BJ (cell line): ENCODE measurements at regions of chr15 and their contacts with region 1.

Region 1: DNA sequence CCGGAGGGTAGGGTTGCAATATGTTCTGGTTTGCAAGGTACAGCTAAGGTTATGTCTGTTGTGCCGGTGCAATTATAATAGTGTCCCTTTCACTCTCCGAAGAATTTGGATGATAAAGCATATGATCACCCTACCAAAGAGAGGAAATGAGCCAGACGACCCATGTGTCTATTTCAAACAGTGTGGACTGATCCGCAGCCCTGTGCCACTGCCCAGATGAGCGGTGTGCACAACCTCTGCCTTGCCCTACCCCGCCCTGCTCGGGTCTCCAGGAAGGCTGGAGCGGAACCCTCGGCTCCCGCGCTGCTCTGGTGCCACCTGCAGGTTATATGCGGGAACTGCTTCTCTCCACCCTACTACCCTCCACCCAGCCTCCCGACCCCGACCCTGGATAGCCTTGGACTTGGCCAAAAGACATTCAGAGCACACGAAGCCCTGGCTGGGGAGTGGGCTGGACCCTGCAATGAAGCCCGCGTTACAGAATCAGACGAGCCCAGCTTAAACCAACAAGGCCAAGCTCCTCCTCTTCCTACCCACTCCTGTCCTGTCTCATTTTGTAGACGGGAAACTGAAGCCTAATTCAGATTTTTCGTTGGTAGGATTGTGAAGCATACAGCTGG is 68.4 kb upstream of the CHRNB4 start:
- DNase-seq: no peak
- H3K4me3 ChIP-seq: no peak overlapping the region
- H3K27me3 ChIP-seq: no peaks in the 10 kb centered on the region; the same call in none of the 2 replicates
- CTCF ChIP-seq: peak; percentile 93

Region 2: GRCh38 chr15:78540929-78541743 is 168.2 kb before region 1 on chr15:
- CTCF ChIA-PET with region 1: no interaction called
- POLR2A ChIA-PET with region 1: no interaction called
- DNase-seq: no peak
- H3K4me3 ChIP-seq: peak overlapping the region; percentile 63
- H3K27me3 ChIP-seq: no peaks in the 10 kb centered on the region
- CTCF ChIP-seq: no peak

Region 3: GRCh38 chr15:78618490-78618934 is 90.9 kb before region 1 on chr15:
- CTCF ChIA-PET with region 1: interaction called, 83 read pairs
- POLR2A ChIA-PET with region 1: no interaction called
- DNase-seq: peak; percentile 70
- H3K4me3 ChIP-seq: no peak overlapping the region
- H3K27me3 ChIP-seq: peaks cover 26% of the 10 kb centered on the region
- CTCF ChIP-seq: peak; percentile 79

Region 4: GRCh38 chr15:78638658-78639314 is 70.6 kb before region 1 on chr15:
- CTCF ChIA-PET with region 1: interaction called, 21 read pairs
- POLR2A ChIA-PET with region 1: no interaction called
- DNase-seq: no peak
- H3K4me3 ChIP-seq: no peak overlapping the region
- H3K27me3 ChIP-seq: peaks cover 14% of the 10 kb centered on the region
- CTCF ChIP-seq: peak; percentile 62

Region 5: GRCh38 chr15:78695854-78696253 is 13.5 kb before region 1 on chr15:
- CTCF ChIA-PET with region 1: interaction called, 17 read pairs
- POLR2A ChIA-PET with region 1: no interaction called
- DNase-seq: no peak
- H3K4me3 ChIP-seq: no peak overlapping the region
- H3K27me3 ChIP-seq: no peaks in the 10 kb centered on the region; the same call in 1 of the 2 replicates
- CTCF ChIP-seq: no peak